Endothelial cell of umbilical vein (primary cell): ENCODE measurements at regions of chr5 and their contacts with region 1.

Region 1: GRCh38 chr5:121251954-121252353 is 599.7 kb upstream of the FTMT start:
- DNase-seq: peak; percentile 83
- H3K4me3 ChIP-seq: no peak overlapping the region
- H3K27ac ChIP-seq: peak overlapping the region; percentile 85
- H3K4me1 ChIP-seq: peaks cover 18% of the 10 kb centered on the region
- H3K27me3 ChIP-seq: no peaks in the 10 kb centered on the region
- CTCF ChIP-seq: no peak
- POLR2A ChIP-seq: no peak

Region 2: DNA sequence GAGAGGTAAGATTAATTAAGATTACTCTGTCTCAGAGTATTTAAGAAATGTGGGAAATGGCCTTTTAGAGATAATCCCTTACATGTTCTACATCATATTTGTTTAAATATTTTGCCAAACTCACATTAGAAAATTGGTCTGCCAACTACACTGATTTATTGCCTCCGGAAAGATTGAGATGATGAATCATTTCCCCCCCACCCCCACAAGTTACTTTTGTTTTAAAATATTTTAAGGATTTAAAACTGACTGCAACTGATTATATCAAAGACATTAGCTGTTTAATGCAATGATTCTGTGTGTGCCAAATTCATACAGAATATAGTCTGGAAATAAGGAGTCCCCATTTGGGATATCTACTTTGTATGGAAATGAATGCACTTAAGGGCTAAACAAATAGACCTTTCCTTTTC is 113.5 kb before region 1 on chr5:
- CTCF ChIA-PET with region 1: no interaction called
- POLR2A ChIA-PET with region 1: no interaction called
- dilution Hi-C with region 1: no loop called
- intact Hi-C with region 1: loop called (anchors 1 kb)
- DNase-seq: peak; percentile 83
- H3K4me3 ChIP-seq: no peak overlapping the region
- H3K27ac ChIP-seq: peak overlapping the region; percentile 43
- H3K4me1 ChIP-seq: peaks cover 19% of the 10 kb centered on the region
- H3K27me3 ChIP-seq: no peaks in the 10 kb centered on the region
- CTCF ChIP-seq: no peak
- POLR2A ChIP-seq: no peak

Region 3: GRCh38 chr5:121182788-121183490 is 69.0 kb before region 1 on chr5:
- CTCF ChIA-PET with region 1: no interaction called
- POLR2A ChIA-PET with region 1: no interaction called
- dilution Hi-C with region 1: no loop called
- intact Hi-C with region 1: loop called (anchors 1 kb)
- DNase-seq: peak; percentile 62
- H3K4me3 ChIP-seq: no peak overlapping the region
- H3K27ac ChIP-seq: peak overlapping the region; percentile 15
- H3K4me1 ChIP-seq: peaks cover 18% of the 10 kb centered on the region
- H3K27me3 ChIP-seq: no peaks in the 10 kb centered on the region
- CTCF ChIP-seq: no peak
- POLR2A ChIP-seq: no peak

Region 4: DNA sequence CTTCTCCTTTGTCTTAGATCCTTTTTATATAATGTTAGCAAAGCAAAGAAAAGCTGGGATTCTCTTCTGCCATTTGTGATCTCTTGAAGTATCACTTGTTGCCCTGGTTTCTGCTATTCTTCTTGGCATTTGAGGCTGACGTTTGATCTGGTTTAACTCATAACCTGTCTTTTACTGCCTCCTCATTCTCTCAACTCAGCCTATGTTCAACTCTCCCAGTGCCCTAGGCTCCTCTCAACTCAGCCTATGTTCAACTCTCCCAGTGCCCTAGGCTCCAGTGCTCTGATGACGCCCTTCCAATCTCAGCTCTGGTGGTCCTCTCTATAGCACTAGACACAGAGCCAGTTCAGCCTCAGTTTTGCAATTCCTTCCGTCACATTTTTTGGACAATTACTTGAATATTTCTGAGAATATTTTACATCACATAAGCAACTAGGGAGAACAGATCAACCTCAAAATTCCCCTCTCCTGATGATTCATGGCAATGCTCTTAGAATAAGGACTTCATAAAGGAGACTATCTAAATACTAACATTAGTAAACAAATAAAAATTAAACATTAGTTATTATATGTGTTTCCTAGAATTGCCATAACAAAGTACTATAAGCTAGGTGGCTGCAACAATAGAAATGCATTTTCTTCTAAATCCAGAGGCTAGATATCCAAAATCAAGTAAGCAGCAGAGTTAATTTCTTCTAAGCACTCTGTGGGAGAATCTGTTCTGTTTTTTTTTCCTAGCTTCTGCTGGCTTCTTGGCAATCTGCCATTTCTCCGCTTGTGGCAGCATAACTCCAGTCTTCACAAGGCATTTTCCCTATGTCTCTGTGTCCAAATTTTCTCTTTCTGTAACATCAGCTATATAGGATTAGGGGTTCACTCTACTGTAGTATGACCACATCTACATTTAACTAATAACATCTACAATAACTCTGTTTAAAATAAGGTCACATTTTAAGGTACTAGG is 62.3 kb before region 1 on chr5:
- CTCF ChIA-PET with region 1: no interaction called
- POLR2A ChIA-PET with region 1: no interaction called
- dilution Hi-C with region 1: no loop called
- intact Hi-C with region 1: loop called (anchors 2 kb)
- DNase-seq: peak; percentile 75
- H3K4me3 ChIP-seq: no peak overlapping the region
- H3K27ac ChIP-seq: peak overlapping the region; percentile 69
- H3K4me1 ChIP-seq: peaks cover 19% of the 10 kb centered on the region
- H3K27me3 ChIP-seq: no peaks in the 10 kb centered on the region
- CTCF ChIP-seq: no peak
- POLR2A ChIP-seq: no peak

Region 5: GRCh38 chr5:121273833-121274433 is 22.0 kb after region 1 on chr5:
- CTCF ChIA-PET with region 1: interaction called, 3 read pairs
- POLR2A ChIA-PET with region 1: no interaction called
- dilution Hi-C with region 1: no loop called
- intact Hi-C with region 1: loop called (anchors 1 kb)
- DNase-seq: peak; percentile 87
- H3K4me3 ChIP-seq: no peak overlapping the region
- H3K27ac ChIP-seq: peak overlapping the region; percentile 91
- H3K4me1 ChIP-seq: peaks cover 11% of the 10 kb centered on the region
- H3K27me3 ChIP-seq: no peaks in the 10 kb centered on the region
- CTCF ChIP-seq: no peak
- POLR2A ChIP-seq: no peak

Region 6: DNA sequence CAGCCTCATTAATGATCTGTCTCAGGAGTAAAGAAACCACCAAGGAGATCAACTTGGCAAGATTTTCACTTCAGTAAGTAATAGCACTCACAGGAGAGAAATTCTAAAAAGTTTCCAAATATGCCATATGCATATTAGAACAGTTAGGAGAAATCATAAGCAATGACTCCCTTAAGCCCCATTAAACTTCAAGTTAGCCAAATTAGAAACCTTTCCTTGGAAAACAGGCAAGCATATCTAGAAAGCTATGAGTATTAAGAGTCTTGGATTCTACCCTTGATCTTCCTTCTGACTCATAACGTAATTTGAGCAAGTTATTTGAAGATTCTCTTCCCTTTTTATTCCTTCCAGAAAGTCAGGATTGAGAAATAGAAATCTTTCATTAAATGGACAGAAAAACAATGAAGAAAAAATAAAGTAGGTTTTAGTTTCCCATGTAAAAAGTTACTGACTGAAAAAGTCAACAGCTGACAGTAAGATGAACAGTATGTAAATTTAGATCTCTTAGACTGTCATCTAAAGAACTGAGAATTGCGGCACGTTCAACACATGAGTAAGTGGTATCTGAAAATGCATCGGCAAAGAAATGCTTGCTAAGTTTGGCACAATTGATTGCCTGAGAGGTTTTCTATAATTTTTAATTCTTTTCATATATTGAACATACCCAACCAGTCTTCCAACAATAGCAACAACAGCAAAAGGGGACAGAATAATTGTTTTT is 34.0 kb after region 1 on chr5:
- CTCF ChIA-PET with region 1: no interaction called
- POLR2A ChIA-PET with region 1: no interaction called
- dilution Hi-C with region 1: no loop called
- intact Hi-C with region 1: no loop called
- DNase-seq: no peak
- H3K4me3 ChIP-seq: no peak overlapping the region
- H3K27ac ChIP-seq: no peak overlapping the region
- H3K4me1 ChIP-seq: no peaks in the 10 kb centered on the region
- H3K27me3 ChIP-seq: no peaks in the 10 kb centered on the region
- CTCF ChIP-seq: no peak
- POLR2A ChIP-seq: no peak

Region 7: GRCh38 chr5:121325930-121326329 is 74.0 kb after region 1 on chr5:
- CTCF ChIA-PET with region 1: no interaction called
- POLR2A ChIA-PET with region 1: no interaction called
- dilution Hi-C with region 1: no loop called
- intact Hi-C with region 1: loop called (anchors 2 kb)
- DNase-seq: peak; percentile 90
- H3K4me3 ChIP-seq: no peak overlapping the region
- H3K27ac ChIP-seq: no peak overlapping the region
- H3K4me1 ChIP-seq: no peaks in the 10 kb centered on the region
- H3K27me3 ChIP-seq: no peaks in the 10 kb centered on the region
- CTCF ChIP-seq: no peak
- POLR2A ChIP-seq: peak; percentile 34